ENCODE measurements at regions of chr6 and their contacts with region 1.

Region 1: GRCh38 chr6:135497412-135498269 is at the start of gene AHI1:
- DNase-seq: peak; percentile 97 to 99
- ATAC-seq: peak; percentile 99
- H3K4me3 ChIP-seq: peak within 1 kb of the TSS; percentile 96 to 99
- H3K27ac ChIP-seq: peak within 1 kb of the TSS; percentile 79 to 96
- H3K4me1 ChIP-seq: peaks cover 0 to 1% of the 10 kb centered on the region in 2 donors
- H3K27me3 ChIP-seq: no peaks in the 10 kb centered on the region
- total RNA-seq, gene AHI1: 44.9 to 65.5 TPM

Region 2: DNA sequence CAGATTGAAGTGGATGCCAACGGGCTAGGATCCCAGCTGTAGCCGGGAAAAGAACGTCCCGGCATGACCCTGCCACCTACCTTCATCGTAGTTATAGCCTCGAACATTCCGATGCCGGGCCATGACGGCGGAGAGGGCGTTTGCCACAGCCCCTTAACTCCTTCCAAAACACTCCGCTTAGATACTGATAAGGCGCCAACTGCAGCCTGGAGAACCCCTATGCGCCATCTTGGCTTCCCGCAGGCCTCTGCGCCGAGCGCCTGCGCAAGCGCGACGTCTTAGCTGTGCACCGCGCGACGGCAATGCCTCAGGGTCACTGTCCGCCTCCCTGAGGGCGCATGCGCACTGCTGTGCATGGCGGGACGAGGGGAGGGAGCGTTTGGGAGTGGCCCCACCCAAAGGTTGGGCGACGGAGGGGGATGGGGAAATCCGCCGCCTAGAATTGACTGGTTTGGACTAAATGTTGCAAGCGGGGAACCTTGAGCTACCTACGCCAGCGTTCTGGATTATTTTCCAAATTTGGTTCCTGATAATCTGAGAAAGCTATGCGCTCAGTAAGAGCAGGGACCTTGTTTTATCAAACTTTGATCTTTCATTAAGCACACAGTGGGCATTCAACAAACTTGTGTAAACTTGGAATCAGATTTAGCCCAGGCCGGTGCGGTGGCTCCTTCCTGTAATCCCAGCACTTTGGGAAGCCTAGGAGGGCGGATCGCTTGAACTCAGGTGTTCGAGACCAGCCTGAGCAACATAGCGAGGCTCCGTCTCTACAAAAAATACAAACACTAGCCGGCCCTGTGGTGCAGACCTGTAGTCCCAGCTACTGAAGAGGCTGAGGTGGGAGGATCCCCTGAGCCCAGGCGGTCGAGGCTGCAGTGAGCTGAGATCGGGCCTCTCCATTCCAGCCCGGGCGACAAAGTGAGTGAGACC is 442.8 kb before region 1 on chr6 and contains the start of gene HBS1L:
- intact Hi-C with region 1: loop called in 1 of 2 experiments (anchors 10 kb)
- DNase-seq: peak; percentile 98 to 99
- ATAC-seq: peak; percentile 100
- H3K4me3 ChIP-seq: peak within 1 kb of the TSS; percentile 83 to 92
- H3K27ac ChIP-seq: peak within 1 kb of the TSS in 1 of 2 donors; percentile 66
- H3K4me1 ChIP-seq: no peaks in the 10 kb centered on the region
- H3K27me3 ChIP-seq: no peaks in the 10 kb centered on the region
- total RNA-seq, gene HBS1L: 59.2 to 61.0 TPM

Region 3: DNA sequence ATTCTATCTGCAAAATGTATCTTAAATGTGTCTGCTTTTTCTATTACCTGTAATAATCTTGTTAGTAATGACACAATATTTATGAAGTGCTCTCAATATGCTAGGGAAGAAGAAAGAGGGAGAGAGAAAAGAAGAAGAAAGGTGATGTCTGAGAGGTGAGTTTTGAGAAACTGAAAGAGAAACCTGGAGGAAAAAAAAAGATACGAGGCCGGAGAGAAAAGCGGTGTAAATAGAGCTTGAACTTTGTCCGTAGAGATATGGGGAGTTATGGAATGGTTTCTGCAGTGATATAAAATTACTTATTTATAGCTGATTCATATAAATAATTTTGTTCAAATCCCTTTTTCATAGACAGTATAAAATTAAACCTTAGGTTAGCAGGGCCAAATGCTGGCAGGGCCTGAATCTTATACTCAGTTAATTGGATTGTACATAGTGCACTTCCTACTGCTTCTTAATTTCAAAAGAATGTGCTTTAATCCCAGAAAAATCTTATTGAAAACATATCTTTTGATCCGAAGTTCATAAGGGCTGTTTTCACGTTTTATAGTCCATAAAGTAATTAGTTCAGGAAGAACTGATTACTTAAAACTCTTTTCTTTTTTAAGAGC is 273.5 kb before region 1 on chr6:
- intact Hi-C with region 1: no loop called
- DNase-seq: no peak
- ATAC-seq: no peak
- H3K4me3 ChIP-seq: no peak overlapping the region
- H3K27ac ChIP-seq: no peak overlapping the region
- H3K4me1 ChIP-seq: no peaks in the 10 kb centered on the region
- H3K27me3 ChIP-seq: no peaks in the 10 kb centered on the region

Region 4: DNA sequence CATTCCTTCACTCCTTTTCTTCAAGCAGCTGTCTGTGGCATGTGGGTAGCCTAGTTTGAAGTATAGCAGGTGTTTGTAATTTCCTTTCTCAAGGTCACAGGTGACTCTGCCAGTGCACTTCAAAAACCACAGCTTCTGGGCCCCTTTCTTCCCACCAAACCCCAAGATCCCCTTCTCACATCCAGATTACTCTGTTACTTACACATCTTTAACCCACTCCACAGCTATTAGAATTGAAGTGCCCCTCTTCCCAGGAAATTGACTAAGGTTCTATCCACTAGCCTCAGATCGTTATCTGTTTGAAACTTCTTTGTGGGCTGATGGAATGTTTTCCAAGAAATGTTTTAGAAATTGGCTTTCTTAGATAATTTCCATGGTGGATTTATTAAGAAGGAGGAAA is 150.9 kb before region 1 on chr6:
- intact Hi-C with region 1: no loop called
- DNase-seq: no peak
- ATAC-seq: no peak
- H3K4me3 ChIP-seq: no peak overlapping the region
- H3K27ac ChIP-seq: no peak overlapping the region
- H3K4me1 ChIP-seq: no peaks in the 10 kb centered on the region
- H3K27me3 ChIP-seq: no peaks in the 10 kb centered on the region

Region 5: DNA sequence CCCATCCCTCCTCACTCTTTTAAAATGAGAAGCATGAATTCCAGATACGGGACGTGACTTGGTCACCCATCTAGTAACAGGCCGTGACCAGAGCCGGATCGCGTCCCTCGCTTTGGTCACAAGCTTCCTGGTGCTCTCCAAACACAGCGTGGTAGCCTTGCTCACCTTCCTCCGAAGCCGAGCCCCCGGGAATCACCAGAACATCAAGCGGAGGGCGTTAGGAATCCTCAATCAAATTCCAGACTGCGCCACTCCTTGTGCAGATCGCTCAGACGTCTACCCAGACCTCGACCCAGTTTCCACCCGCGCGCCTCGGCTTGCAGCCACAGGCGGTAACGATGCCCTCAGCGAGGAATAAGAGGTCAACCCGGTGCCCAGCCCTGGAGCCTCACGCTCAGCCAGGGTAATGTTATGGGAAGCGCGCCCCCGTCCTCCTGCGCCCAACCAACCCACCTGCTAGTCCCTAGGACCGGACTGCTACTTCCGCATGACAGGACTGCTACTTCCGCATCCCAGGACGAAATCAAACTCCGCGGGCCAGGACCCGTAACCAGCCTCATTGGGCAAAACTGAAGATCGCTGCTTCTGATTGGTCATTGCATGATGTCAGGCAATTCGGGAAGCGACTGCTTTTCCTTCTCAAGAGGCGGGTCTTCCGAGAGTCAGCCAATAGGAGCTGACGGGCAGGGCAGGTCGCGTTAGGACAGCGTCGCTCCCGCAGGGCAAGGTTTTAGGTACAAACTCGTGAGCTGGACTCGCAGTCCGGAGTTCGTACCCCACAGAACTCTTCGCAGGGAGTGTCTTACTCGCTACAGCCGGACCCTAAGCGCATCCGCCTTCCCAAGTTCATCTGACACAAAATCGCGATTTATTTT is 752.4 kb after region 1 on chr6 and contains the start of gene MTFR2:
- intact Hi-C with region 1: loop called in 1 of 2 experiments (anchors 1 kb)
- DNase-seq: peak; percentile 94 to 97
- ATAC-seq: peak; percentile 98
- H3K4me3 ChIP-seq: peak within 1 kb of the TSS; percentile 67 to 73
- H3K27ac ChIP-seq: no peak within 1 kb of the TSS
- H3K4me1 ChIP-seq: no peaks in the 10 kb centered on the region
- H3K27me3 ChIP-seq: no peaks in the 10 kb centered on the region
- total RNA-seq, gene MTFR2: 0.39 to 0.60 TPM

Region 6: GRCh38 chr6:136289579-136290409 is 792.2 kb after region 1 on chr6 and contains the start of gene BCLAF1:
- intact Hi-C with region 1: loop called in 1 of 2 experiments (anchors 2 kb)
- DNase-seq: peak; percentile 100
- ATAC-seq: peak; percentile 98
- H3K4me3 ChIP-seq: peak within 1 kb of the TSS; percentile 77 to 93
- H3K27ac ChIP-seq: peak within 1 kb of the TSS; percentile 100
- H3K4me1 ChIP-seq: peaks cover 0 to 5% of the 10 kb centered on the region in 2 donors
- H3K27me3 ChIP-seq: no peaks in the 10 kb centered on the region
- total RNA-seq, gene BCLAF1: 132 to 134 TPM

Measured in aorta (tissue), 5 donors.